Activated B cell treated with CpG ODN at 0.5 μM for 24 hours (primary cell): ENCODE measurements at regions of chr9 and their contacts with region 1.

Region 1: DNA sequence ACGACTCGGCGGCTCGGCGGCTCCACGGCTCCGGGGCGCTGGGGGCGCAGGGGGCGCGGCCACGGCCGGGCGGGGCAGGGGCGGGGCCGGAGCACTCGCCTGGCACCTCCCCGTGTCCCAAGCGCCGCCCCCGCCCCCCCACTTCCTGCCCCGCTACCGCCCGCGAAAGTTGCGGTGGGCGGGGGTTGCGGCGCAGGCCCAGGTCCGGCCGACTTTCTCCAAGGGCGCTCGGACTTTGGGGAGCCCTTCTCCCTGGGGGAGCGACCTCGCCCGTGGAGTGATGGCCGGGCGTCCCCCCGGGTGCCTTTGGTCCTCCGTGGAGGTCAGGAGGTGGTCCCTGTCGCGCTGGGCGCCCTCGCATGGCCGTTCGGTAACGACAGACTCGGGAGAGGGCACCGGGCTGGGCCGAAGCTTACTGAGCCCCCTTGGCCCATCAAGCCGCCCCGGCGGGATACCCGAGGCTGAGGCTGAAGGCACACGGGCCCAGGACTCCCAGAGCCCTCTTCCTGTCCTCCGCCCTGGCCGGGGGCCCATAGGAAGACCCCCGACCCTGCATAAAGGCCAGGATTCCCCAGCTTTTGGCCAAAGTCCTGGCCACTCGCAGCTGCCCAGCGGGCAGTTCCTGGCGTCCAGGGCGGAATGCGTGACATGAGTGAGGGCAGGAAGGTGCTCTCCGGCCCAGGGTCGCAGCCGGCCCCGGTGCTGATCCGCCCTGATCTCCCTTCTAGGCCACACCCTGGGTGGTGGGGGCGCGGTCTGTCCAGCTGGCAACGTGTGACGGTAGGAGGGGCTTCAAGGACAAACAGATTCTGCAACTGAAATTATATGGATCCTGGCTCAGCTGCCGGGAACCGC is 883 bp upstream of the VAV2 start:
- DNase-seq: peak; percentile 80
- ATAC-seq: peak; percentile 76
- H3K4me3 Mint-ChIP-seq: peak overlapping the region; percentile 76
- H3K27ac Mint-ChIP-seq: peak overlapping the region; percentile 65
- H3K4me1 Mint-ChIP-seq: peaks cover 39% of the 10 kb centered on the region
- H3K27me3 Mint-ChIP-seq: no peaks in the 10 kb centered on the region
- CTCF ChIP-seq: no peak

Region 2: GRCh38 chr9:133742849-133743444 is 250.1 kb before region 1 on chr9:
- CTCF ChIA-PET with region 1: interaction called, 15 read pairs
- POLR2A ChIA-PET with region 1: no interaction called
- intact Hi-C with region 1: loop called (anchors 5 kb)
- DNase-seq: peak; percentile 77
- ATAC-seq: peak; percentile 84
- H3K4me3 Mint-ChIP-seq: no peak overlapping the region
- H3K27ac Mint-ChIP-seq: no peak overlapping the region
- H3K4me1 Mint-ChIP-seq: peaks cover 9% of the 10 kb centered on the region
- H3K27me3 Mint-ChIP-seq: peaks cover 19% of the 10 kb centered on the region
- CTCF ChIP-seq: peak; percentile 98

Region 3: GRCh38 chr9:133792721-133793470 is 200.1 kb before region 1 on chr9:
- CTCF ChIA-PET with region 1: interaction called, 126 read pairs
- POLR2A ChIA-PET with region 1: interaction called, 20 read pairs
- intact Hi-C with region 1: loop called (anchors 1 kb)
- DNase-seq: peak; percentile 70
- ATAC-seq: peak; percentile 88
- H3K4me3 Mint-ChIP-seq: peak overlapping the region; percentile 57
- H3K27ac Mint-ChIP-seq: peak overlapping the region; percentile 66
- H3K4me1 Mint-ChIP-seq: peaks cover 74% of the 10 kb centered on the region
- H3K27me3 Mint-ChIP-seq: no peaks in the 10 kb centered on the region
- CTCF ChIP-seq: peak; percentile 30

Region 4: DNA sequence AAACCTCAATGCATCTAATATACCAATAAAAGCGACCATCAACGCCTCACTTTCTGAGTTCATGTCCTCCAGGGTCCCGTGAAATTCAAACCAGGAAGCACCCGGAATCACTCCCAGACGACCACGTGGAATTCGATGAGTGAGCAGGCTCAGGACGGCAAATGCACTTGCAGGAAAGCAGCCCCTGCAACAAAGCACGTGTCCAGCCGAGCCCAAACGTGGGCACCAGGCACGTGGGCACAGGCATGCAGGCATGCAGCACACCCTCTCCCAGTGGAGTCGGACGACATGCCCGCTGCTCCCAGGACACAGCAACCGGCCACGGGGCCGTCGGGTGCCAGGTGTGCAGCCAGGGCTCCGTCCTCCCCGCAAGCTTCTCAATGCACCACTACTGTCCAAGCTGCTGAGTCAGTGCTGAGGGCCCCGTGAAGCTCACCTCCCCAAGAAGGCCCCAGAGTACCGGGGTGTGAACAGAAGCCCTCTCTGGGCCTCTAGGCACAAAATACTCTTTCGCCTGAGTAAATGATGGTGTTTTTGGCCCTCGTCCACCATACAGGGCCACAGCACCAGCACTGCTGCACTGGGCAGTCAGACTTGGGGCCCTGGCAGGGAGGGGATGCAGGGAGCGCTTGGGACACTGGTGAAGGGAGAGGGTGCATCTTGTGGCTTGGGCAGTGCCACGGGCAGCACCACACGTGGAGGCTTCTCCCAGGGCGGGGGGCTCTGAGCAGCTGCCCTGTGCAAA is 88.5 kb before region 1 on chr9:
- CTCF ChIA-PET with region 1: no interaction called
- POLR2A ChIA-PET with region 1: no interaction called
- intact Hi-C with region 1: loop called (anchors 5 kb)
- DNase-seq: no peak
- ATAC-seq: no peak
- H3K4me3 Mint-ChIP-seq: no peak overlapping the region
- H3K27ac Mint-ChIP-seq: peak overlapping the region; percentile 27
- H3K4me1 Mint-ChIP-seq: peaks cover 76% of the 10 kb centered on the region
- H3K27me3 Mint-ChIP-seq: no peaks in the 10 kb centered on the region
- CTCF ChIP-seq: no peak

Region 5: GRCh38 chr9:133955821-133956411 is 37.1 kb before region 1 on chr9:
- CTCF ChIA-PET with region 1: interaction called, 6 read pairs
- POLR2A ChIA-PET with region 1: interaction called, 8 read pairs
- intact Hi-C with region 1: loop called (anchors 2 kb)
- DNase-seq: no peak
- ATAC-seq: peak; percentile 68
- H3K4me3 Mint-ChIP-seq: peak overlapping the region; percentile 86
- H3K27ac Mint-ChIP-seq: peak overlapping the region; percentile 96
- H3K4me1 Mint-ChIP-seq: peaks cover 71% of the 10 kb centered on the region
- H3K27me3 Mint-ChIP-seq: no peaks in the 10 kb centered on the region
- CTCF ChIP-seq: no peak

Region 6: DNA sequence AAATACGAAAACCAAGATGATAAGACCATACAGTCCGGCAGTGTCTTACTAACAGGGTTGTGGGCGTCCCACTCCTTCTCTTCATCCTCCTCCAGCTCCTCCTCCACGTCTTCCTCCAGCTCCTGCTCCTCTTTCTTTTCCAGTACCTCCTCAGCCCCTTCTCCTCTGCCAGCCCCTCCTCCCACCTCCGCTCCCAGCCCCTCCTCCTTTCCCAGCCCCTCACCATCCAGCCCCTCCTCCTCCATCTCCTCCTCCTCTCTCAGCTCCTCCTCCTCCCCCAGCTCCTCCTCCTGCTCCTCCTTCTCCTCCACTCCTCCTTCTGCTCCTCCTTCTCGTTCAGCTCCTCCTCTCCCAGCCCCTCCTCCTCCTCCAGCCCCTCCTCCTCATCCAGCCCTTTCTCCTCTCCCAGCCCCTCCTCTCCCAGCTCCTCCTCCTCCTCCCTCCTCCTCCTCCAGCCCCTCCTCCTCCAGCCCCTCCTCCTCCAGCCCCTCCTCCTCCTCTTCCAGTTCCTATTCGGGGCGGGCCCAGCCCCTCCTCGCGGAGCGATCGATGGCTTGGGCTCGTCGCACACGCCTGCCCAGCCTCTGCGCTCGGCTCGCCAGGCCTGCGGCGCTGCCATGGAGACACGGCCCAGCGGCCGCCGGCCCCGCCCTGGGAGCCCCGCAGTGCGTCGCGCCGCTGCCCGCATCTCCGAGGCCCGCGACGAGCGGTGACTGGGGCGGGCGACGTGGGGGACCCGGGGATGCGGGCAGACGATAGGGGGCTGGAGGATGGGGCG is 32.0 kb after region 1 on chr9 and contains the start of gene BRD3OS:
- CTCF ChIA-PET with region 1: interaction called, 5 read pairs
- POLR2A ChIA-PET with region 1: no interaction called
- intact Hi-C with region 1: loop called (anchors 1 kb)
- DNase-seq: peak; percentile 85
- ATAC-seq: peak; percentile 94
- H3K4me3 Mint-ChIP-seq: peak within 1 kb of the TSS; percentile 83
- H3K27ac Mint-ChIP-seq: peak within 1 kb of the TSS; percentile 61
- H3K4me1 Mint-ChIP-seq: peaks cover 16% of the 10 kb centered on the region
- H3K27me3 Mint-ChIP-seq: no peaks in the 10 kb centered on the region
- CTCF ChIP-seq: no peak
- total RNA-seq, gene BRD3OS: 17.3 and 19.3 TPM in 2 replicates

Region 7: GRCh38 chr9:134088063-134088725 is 95.2 kb after region 1 on chr9:
- CTCF ChIA-PET with region 1: no interaction called
- POLR2A ChIA-PET with region 1: no interaction called
- intact Hi-C with region 1: no loop called
- DNase-seq: no peak
- ATAC-seq: no peak
- H3K4me3 Mint-ChIP-seq: no peak overlapping the region
- H3K27ac Mint-ChIP-seq: no peak overlapping the region
- H3K4me1 Mint-ChIP-seq: no peaks in the 10 kb centered on the region
- H3K27me3 Mint-ChIP-seq: peaks cover 5% of the 10 kb centered on the region
- CTCF ChIP-seq: no peak